Sigmoid colon (tissue), 7 donors: ENCODE measurements at regions of chr17 and their contacts with region 1.

Region 1: DNA sequence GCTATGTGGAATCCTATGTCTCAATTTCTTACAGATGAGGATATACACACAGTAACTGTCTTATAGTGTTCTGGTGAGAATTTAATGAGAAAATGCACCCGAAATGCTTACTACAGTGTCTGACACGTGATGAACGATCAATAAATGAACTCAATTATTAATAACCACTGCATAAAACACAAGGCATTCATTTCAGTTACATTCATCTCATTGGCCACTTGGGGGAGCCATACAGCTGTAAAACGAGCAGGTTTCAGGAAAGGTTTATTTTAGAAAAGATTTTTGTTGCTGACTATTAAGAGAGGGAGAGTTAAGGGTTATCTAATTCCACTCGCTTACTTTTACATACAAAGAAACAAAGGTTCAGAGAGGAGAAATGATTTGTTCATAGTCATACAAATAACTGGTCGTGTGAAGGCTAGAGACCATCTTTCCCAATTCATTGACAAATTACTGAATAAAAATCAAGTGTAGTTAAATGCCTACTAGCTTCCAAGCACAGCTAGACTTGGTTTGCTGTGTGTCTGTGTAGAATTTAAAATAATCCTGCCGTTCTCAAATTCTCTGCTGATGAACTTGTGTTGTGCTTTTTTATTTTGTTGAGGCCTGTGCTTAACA is 160.1 kb downstream of the MAP2K4 start:
- DNase-seq: no peak
- H3K4me3 ChIP-seq: no peak overlapping the region
- H3K27ac ChIP-seq: peak overlapping the region; percentile 58 to 73 (median 64)
- H3K4me1 ChIP-seq: peaks cover 4 to 14% (median 8%) of the 10 kb centered on the region in 4 donors
- H3K27me3 ChIP-seq: no peaks in the 10 kb centered on the region
- CTCF ChIP-seq: peak; percentile 62 to 73 (median 70)
- EP300 ChIP-seq: no peak
- POLR2A ChIP-seq: no peak

Region 2: DNA sequence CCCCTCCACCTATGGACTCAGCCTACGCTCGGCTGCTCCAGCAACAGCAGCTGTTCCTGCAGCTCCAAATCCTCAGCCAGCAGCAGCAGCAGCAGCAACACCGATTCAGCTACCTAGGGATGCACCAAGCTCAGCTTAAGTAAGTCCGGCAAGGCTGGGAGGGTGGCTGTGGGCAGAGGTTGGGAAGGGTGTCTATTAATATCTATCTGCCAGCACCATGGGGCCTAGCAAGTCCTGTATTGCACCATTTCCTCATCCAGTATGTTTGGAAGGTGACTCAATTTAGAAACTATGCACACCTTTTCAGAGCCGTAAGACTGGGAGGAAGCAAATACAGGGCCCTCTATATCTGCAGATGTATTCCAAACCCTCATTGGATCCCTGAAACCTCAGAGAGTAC is 563.5 kb after region 1 on chr17:
- intact Hi-C with region 1: loop called (anchors 2 kb)
- DNase-seq: no peak
- H3K4me3 ChIP-seq: no peak overlapping the region
- H3K27ac ChIP-seq: peak overlapping the region in 2 of 4 donors; percentile 19 to 32
- H3K4me1 ChIP-seq: peaks cover 0 to 15% (median 10%) of the 10 kb centered on the region in 4 donors
- H3K27me3 ChIP-seq: no peaks in the 10 kb centered on the region
- CTCF ChIP-seq: no peak
- EP300 ChIP-seq: no peak
- POLR2A ChIP-seq: no peak

Region 3: DNA sequence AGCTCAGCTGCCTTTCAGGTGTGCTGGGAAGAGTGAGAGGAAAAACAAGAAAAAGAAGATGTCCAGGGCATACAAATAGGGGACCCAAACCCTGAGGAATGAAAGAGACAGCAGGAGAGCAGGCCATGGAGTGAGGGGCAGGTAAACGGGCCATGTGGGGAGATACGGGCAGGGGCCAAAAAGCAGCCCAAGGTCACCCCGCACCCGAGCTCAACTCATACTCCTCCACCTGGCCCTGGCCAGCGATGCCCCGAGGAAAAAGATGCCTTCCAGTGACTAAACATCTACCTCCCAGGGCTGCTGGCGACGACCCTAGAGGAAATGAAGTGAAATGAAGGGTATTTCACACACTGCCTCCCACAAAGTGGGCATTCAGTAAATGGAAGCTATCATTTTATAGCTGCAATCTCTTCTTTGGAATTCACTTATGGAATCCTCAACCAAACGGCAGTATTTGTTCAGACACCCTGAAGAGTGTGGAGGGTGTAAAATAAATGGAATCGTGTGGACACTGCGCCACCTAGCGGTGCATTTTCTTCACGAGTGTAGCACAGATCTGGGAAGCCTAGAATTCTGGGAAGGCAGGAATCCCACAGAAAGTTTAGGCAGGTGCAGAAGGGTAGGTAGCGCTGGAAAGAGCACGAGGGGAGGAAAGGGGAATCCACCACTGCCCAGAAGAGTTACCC is 822.2 kb after region 1 on chr17:
- intact Hi-C with region 1: loop called (anchors 1 kb)
- DNase-seq: peak; percentile 86
- H3K4me3 ChIP-seq: no peak overlapping the region
- H3K27ac ChIP-seq: no peak overlapping the region
- H3K4me1 ChIP-seq: peaks cover 0 to 8% (median 2%) of the 10 kb centered on the region in 4 donors
- H3K27me3 ChIP-seq: no peaks in the 10 kb centered on the region
- CTCF ChIP-seq: peak; percentile 69 to 87 (median 76)
- EP300 ChIP-seq: no peak
- POLR2A ChIP-seq: no peak